Mammary epithelial cell (primary cell): ENCODE measurements at regions of chr6 and their contacts with region 1.

Region 1: GRCh38 chr6:30453508-30454116 is 35.7 kb upstream of the HLA-E start:
- DNase-seq: peak; percentile 79
- H3K4me3 ChIP-seq: no peak overlapping the region
- H3K27ac ChIP-seq: no peak overlapping the region
- H3K4me1 ChIP-seq: peaks cover 7% of the 10 kb centered on the region
- H3K27me3 ChIP-seq: peaks cover 25% of the 10 kb centered on the region
- CTCF ChIP-seq: peak; percentile 82 to 85

Region 2: GRCh38 chr6:30357678-30358540 is 95.7 kb before region 1 on chr6:
- CTCF ChIA-PET with region 1: no interaction called
- dilution Hi-C with region 1: no loop called
- in situ Hi-C with region 1: no loop called
- intact Hi-C with region 1: loop called (anchors 1 kb)
- DNase-seq: peak; percentile 44
- H3K4me3 ChIP-seq: peak overlapping the region; percentile 39 to 52 (median 47)
- H3K27ac ChIP-seq: no peak overlapping the region
- H3K4me1 ChIP-seq: peaks cover 6% of the 10 kb centered on the region
- H3K27me3 ChIP-seq: peaks cover 10% of the 10 kb centered on the region
- CTCF ChIP-seq: peak; percentile 63 to 77

Region 3: GRCh38 chr6:30411515-30412207 is 42.0 kb before region 1 on chr6:
- CTCF ChIA-PET with region 1: interaction called, 5 read pairs
- dilution Hi-C with region 1: loop called (anchors 5 kb)
- in situ Hi-C with region 1: no loop called
- intact Hi-C with region 1: loop called (anchors 1 kb)
- DNase-seq: peak; percentile 50
- H3K4me3 ChIP-seq: no peak overlapping the region
- H3K27ac ChIP-seq: no peak overlapping the region
- H3K4me1 ChIP-seq: peaks cover 2% of the 10 kb centered on the region
- H3K27me3 ChIP-seq: peaks cover 3% of the 10 kb centered on the region
- CTCF ChIP-seq: peak; percentile 64 to 86

Region 4: GRCh38 chr6:30418448-30418847 is 35.2 kb before region 1 on chr6:
- CTCF ChIA-PET with region 1: no interaction called
- dilution Hi-C with region 1: loop called (anchors 5 kb)
- in situ Hi-C with region 1: no loop called
- intact Hi-C with region 1: no loop called
- DNase-seq: no peak
- H3K4me3 ChIP-seq: no peak overlapping the region
- H3K27ac ChIP-seq: no peak overlapping the region
- H3K4me1 ChIP-seq: no peaks in the 10 kb centered on the region
- H3K27me3 ChIP-seq: no peaks in the 10 kb centered on the region
- CTCF ChIP-seq: no peak

Region 5: GRCh38 chr6:30686908-30687658 is 233.5 kb after region 1 on chr6:
- CTCF ChIA-PET with region 1: no interaction called
- dilution Hi-C with region 1: no loop called
- in situ Hi-C with region 1: no loop called
- intact Hi-C with region 1: no loop called
- DNase-seq: peak; percentile 99
- H3K4me3 ChIP-seq: peak overlapping the region; percentile 77 to 88 (median 83)
- H3K27ac ChIP-seq: peak overlapping the region; percentile 86
- H3K4me1 ChIP-seq: peaks cover 42% of the 10 kb centered on the region
- H3K27me3 ChIP-seq: no peaks in the 10 kb centered on the region
- CTCF ChIP-seq: no peak